A549 (cell line): ENCODE measurements at regions of chr20 and their contacts with region 1.

Region 1: GRCh38 chr20:63785691-63786131 is 45.4 kb downstream of the ZBTB46 start:
- DNase-seq: no peak
- ATAC-seq: peak; percentile 19 to 25; a peak in 3 of 6 replicates
- H3K4me3 ChIP-seq: no peak overlapping the region
- H3K27ac ChIP-seq: no peak overlapping the region
- H3K4me1 ChIP-seq: no peaks in the 10 kb centered on the region
- CTCF ChIP-seq: no peak
- EP300 ChIP-seq: no peak
- POLR2A ChIP-seq: no peak
- RAD21 ChIP-seq: no peak

Region 2: DNA sequence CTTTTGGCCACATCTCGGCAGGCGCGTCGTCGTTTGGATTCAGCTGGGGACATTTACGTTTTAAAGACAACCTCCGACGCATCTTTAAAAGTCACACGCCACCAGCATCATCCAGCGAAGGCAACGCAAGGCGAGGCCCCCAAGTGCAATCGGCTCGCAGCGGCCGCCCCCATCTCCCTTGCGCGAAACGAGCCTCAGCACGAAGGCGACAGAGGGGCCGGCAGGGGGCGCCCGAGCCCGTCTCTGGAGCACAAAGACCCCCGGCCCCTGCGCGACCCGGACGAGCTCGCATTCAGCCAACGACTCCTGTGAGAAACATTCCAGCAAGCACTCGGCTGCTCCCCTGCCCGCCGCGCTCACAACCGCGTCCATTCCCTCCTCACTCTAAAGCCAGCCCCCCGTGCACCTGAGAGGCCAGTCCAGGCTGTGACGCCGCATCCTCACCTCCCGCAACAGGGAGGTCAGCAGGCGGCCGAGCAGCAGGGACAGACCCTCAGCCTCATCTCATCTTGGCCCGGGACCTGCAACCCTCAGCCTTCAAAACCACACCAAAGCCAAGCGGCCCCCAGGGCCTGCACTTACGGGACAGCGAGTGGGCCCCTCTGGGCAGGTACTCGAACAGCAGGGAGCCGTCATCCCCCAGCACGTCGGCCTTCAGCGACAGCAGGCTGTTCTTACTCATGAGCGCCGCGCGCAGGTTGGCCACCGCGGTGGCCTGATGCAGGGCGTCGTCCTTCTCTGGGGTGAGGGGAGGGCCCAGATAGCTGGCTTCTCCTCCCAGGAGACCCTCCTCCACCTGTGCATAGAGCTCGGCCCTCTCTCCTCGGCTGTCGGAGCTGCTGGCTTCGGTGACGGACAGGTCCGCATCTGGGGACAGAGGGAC is 10.4 kb before region 1 on chr20:
- CTCF ChIA-PET with region 1: interaction called, 43 read pairs
- POLR2A ChIA-PET with region 1: no interaction called
- DNase-seq: no peak
- ATAC-seq: peak; percentile 33 to 60; a peak in 4 of 6 replicates
- H3K4me3 ChIP-seq: no peak overlapping the region
- H3K27ac ChIP-seq: no peak overlapping the region
- H3K4me1 ChIP-seq: peaks cover 11% of the 10 kb centered on the region
- CTCF ChIP-seq: peak; percentile 40
- EP300 ChIP-seq: no peak
- POLR2A ChIP-seq: no peak
- RAD21 ChIP-seq: peak; percentile 27 to 30; a peak in 4 of 5 replicates

Region 3: DNA sequence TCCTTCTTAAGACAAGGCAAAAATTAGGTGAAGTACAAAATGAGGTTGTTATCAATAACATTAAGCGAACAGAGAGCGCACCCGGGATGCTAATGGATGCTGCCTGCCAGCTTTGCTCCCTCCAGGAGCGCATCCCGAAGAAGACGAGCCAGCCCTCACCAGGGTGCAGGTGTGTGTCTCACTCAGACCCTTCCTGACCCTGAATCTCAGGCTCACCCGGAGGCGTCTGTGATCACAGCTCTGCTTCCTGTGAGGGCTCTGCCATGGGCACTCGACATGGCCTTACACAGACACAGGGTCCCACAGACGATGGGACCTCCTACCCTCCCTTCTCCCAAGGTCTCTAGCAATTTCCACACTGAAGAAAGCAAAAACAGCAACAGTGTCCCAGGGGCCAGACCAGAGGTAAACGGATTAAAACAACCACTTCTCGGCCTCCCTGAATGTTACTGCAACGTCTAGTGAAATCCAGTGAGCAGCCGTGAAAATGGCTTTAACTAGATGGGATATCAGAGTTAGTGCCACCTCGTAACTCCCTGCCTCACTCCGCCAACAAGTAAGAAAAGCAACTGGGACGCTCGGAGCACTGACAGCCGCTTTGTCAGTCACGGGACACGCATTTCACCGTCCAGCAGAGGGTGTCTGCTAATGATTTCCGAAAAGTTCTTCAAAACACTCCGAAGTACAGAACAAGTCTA is 33.7 kb after region 1 on chr20:
- CTCF ChIA-PET with region 1: interaction called, 10 read pairs
- POLR2A ChIA-PET with region 1: no interaction called
- DNase-seq: peak; percentile 40 to 52
- ATAC-seq: peak; percentile 77 to 81; a peak in 5 of 6 replicates
- H3K4me3 ChIP-seq: peak overlapping the region; percentile 41
- H3K27ac ChIP-seq: no peak overlapping the region
- H3K4me1 ChIP-seq: 0 out of 3 replicates have a peak, but pooled peaks cover 5% of the 10 kb centered on the region
- CTCF ChIP-seq: peak; percentile 39; the same call in 2 of the 3 replicates
- EP300 ChIP-seq: no peak
- POLR2A ChIP-seq: no peak
- RAD21 ChIP-seq: 0 out of 5 replicates have a peak, but pooled peaks of 1 of the 2 experiments have one; percentile 15